ENCODE measurements at regions of chr7 and their contacts with region 1.

Region 1: GRCh38 chr7:131342864-131343442 is 15.3 kb downstream of the MKLN1 start:
- DNase-seq: no peak
- H3K4me3 ChIP-seq: no peak overlapping the region
- H3K27ac ChIP-seq: no peak overlapping the region
- H3K4me1 ChIP-seq: no peaks in the 10 kb centered on the region
- H3K27me3 ChIP-seq: no peaks in the 10 kb centered on the region
- CTCF ChIP-seq: no peak
- POLR2A ChIP-seq: no peak

Region 2: GRCh38 chr7:131355921-131356777 is 13.2 kb after region 1 on chr7:
- CTCF ChIA-PET with region 1: interaction called, 5 read pairs
- POLR2A ChIA-PET with region 1: no interaction called
- dilution Hi-C with region 1: no loop called
- intact Hi-C with region 1: loop called (anchors 2 kb)
- DNase-seq: no peak
- H3K4me3 ChIP-seq: no peak overlapping the region
- H3K27ac ChIP-seq: no peak overlapping the region
- H3K4me1 ChIP-seq: peaks cover 19% of the 10 kb centered on the region
- H3K27me3 ChIP-seq: no peaks in the 10 kb centered on the region
- CTCF ChIP-seq: no peak
- POLR2A ChIP-seq: no peak

Measured in endothelial cell of umbilical vein (primary cell).